ENCODE measurements at regions of chr10 and their contacts with region 1.

Region 1: DNA sequence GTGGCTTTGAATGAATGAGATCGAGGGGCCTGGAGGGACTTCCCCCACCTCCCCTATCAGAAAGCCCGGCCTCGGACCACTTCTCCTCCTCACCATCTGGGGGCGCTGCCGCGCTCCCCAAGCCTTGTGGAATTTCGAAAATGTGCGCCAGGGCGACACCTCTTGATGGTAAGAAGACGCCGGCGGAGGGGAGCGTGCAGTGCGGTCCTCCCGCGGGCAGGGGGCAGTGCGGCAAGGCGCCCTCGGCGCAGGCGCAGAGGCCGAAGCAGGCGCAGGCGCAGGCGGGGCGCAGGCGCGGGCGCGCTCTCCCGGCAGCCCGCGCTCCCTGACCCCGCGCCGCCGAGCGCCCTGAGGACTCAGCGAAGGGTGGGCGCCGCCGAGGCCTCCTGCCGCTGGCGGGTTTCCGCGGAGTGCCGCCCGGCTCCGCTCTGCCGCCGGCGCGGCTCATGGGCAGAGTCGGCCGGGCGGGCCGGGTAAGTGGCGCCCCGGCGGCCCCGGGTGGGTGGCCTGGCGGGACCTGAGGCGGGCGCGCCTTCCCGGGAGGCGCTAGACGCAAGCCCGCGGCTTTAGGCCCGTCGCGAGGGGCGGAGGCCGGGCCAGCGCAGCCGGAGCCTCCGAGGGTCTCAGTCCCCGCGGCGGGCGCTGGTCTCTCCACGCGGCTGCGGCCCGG is at the start of gene RBM17:
- DNase-seq: peak; percentile 99
- ATAC-seq: peak; percentile 85
- H3K4me3 Mint-ChIP-seq: peak within 1 kb of the TSS; percentile 97
- H3K27ac Mint-ChIP-seq: peak within 1 kb of the TSS; percentile 87
- H3K4me1 Mint-ChIP-seq: peaks cover 69% of the 10 kb centered on the region
- H3K27me3 Mint-ChIP-seq: no peaks in the 10 kb centered on the region
- CTCF ChIP-seq: peak; percentile 99
- total RNA-seq, gene RBM17: 207 and 209 TPM in 2 replicates

Region 2: GRCh38 chr10:5446390-5446926 is 642.4 kb before region 1 on chr10:
- CTCF ChIA-PET with region 1: no interaction called
- POLR2A ChIA-PET with region 1: no interaction called
- intact Hi-C with region 1: loop called (anchors 5 kb)
- DNase-seq: peak; percentile 90
- ATAC-seq: peak; percentile 91
- H3K4me3 Mint-ChIP-seq: peak overlapping the region; percentile 86
- H3K27ac Mint-ChIP-seq: peak overlapping the region; percentile 87
- H3K4me1 Mint-ChIP-seq: peaks cover 56% of the 10 kb centered on the region
- H3K27me3 Mint-ChIP-seq: no peaks in the 10 kb centered on the region
- CTCF ChIP-seq: no peak

Region 3: DNA sequence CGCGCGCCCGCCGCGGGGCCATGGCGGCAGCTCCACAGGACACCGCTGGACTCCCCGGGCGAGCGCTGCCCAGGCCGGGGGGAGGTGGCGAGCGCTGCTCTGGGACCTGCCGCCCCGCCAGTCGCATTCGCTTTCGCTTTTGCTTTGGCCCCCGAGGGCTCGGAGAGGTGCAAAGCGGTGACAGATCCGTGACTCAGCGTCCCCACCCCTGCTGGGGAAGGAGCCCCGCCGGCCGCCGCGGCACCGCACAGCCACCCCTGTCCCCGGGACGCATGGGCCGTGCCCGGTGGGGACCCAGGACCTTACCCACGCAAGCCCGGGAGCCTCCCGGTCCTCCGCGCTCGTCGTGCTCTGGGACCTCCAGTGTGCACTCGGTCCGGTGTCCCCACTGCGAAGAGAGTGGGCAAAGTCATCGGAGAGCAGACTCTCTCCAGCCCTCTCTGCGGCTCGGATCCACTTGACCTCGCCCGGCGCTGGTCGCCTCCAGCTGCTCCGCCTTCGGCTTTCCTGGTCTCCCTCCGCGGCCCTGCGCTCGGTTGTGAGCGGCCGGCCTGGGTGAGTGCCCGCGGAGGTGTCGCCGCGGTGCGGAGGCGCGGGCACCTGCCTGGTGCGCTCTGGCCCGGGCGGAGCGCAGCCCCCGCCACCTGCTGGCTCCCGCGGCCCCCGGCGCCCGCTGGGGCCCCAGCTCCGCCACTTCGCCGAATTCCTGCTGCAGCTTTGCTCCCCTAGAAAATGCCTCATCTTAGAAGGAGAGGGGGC is 111.2 kb before region 1 on chr10 and contains the start of gene IL15RA:
- CTCF ChIA-PET with region 1: interaction called, 4 read pairs
- POLR2A ChIA-PET with region 1: interaction called, 4 read pairs
- intact Hi-C with region 1: loop called (anchors 1 kb)
- DNase-seq: peak; percentile 75
- ATAC-seq: peak; percentile 70
- H3K4me3 Mint-ChIP-seq: peak within 1 kb of the TSS; percentile 96
- H3K27ac Mint-ChIP-seq: peak within 1 kb of the TSS; percentile 91
- H3K4me1 Mint-ChIP-seq: peaks cover 41% of the 10 kb centered on the region
- H3K27me3 Mint-ChIP-seq: no peaks in the 10 kb centered on the region
- CTCF ChIP-seq: no peak
- total RNA-seq, gene IL15RA: 19.1 and 19.8 TPM in 2 replicates

Region 4: DNA sequence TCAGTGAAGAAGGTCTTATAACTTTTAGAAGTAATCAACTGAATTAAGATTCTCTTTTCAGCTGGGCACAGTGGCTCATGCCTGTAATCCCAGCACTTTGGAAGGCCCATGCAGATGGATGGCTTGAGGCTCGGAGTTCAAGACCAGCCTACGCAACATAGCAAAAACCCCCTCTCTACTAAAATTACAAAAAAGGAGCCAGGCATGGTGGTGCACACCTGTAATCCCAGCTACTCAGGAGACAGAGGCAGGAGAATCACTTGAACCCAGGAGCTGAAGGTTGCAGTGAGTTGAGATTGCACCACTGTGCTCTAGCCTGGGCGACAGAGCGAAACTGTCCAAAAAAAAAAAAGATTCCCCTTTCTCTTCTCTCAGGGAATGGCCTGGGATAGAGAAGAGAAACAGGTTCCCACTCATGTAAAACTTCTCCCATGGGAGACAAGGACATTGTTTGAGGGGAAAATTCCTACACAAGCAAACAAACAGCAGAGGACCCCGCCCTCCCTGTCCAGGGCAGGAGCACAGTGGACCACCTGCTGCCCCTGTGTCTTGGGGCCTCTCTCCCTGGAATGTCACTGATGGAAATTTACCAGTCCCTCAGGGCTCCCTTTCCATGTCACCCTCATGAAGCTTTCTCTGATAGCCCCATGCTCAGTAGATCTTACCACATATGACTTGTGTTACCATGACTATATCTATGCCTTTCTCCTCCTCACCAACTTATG is 32.3 kb before region 1 on chr10:
- CTCF ChIA-PET with region 1: interaction called, 69 read pairs
- POLR2A ChIA-PET with region 1: interaction called, 146 read pairs
- intact Hi-C with region 1: loop called (anchors 1 kb)
- DNase-seq: no peak
- ATAC-seq: peak; percentile 1
- H3K4me3 Mint-ChIP-seq: peak overlapping the region; percentile 97
- H3K27ac Mint-ChIP-seq: peak overlapping the region; percentile 93
- H3K4me1 Mint-ChIP-seq: peaks cover 84% of the 10 kb centered on the region
- H3K27me3 Mint-ChIP-seq: no peaks in the 10 kb centered on the region
- CTCF ChIP-seq: no peak

Region 5: DNA sequence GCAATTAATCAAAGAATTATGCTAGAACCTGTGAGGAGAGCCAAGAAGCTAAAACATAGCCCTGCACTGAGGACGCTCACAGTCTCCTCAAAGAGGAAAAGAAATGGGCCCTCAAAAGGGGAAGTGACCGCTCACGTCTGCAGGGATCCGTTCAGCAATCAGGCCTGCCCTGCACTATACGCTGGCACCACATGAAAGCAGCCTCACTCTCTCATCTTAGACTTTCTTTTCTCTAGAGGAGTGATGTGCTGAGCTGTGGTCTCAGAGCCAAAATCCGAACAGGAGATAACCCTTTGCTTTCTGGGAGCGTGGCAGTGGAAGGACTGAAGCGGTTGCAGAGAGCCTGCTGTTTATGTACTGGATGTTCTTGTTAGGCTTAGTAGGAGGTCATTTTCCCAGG is 20.4 kb before region 1 on chr10:
- CTCF ChIA-PET with region 1: interaction called, 79 read pairs
- POLR2A ChIA-PET with region 1: interaction called, 35 read pairs
- intact Hi-C with region 1: loop called (anchors 1 kb)
- DNase-seq: no peak
- ATAC-seq: peak; percentile 72
- H3K4me3 Mint-ChIP-seq: peak overlapping the region; percentile 72
- H3K27ac Mint-ChIP-seq: peak overlapping the region; percentile 97
- H3K4me1 Mint-ChIP-seq: peaks cover 93% of the 10 kb centered on the region
- H3K27me3 Mint-ChIP-seq: no peaks in the 10 kb centered on the region
- CTCF ChIP-seq: no peak

Region 6: DNA sequence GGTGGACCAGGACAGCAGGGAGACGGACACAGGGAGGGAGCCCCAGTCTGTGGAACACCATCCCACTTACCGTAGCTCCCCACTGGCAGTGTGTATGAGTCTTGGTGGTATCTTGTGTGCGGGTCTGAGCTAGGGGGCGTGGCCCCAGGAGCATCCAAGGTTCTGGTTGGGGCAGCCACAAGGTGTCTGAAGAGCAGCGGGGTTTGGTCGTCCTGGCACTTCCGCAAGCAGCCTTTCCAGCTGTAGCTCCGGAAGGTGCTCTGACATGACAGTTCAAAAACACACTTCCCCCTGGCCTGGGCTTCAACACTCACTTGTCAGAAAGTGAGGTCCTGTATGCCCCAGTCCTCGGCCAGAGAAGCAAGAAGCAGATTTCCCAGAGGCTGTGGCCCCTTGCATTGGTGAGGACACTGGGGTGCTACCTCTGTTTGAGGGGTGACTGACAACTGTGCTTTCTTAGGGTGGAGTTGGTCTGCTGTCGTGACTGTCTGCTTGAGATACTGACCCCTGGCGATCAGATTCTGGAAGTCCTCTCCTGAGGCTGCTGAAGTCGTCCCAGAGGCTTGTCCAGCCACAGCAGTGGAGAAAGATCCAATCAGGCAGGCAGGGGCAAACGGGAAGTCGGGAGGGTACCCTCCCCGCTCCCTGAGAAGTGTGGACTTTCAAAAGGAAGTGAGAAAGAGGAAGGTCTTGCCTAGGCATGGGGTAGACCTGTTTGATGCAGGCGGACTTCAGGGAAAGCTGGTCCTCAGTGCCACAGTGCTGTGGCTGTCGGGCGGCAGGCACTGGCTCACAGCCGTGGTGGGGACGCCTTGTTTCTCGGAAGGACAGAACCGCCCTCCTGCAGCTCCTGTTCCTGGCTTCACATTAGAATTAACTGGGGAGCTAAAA is 62.5 kb after region 1 on chr10:
- CTCF ChIA-PET with region 1: interaction called, 7 read pairs
- POLR2A ChIA-PET with region 1: no interaction called
- intact Hi-C with region 1: loop called (anchors 2 kb)
- DNase-seq: peak; percentile 53
- ATAC-seq: peak; percentile 83
- H3K4me3 Mint-ChIP-seq: peak overlapping the region; percentile 79
- H3K27ac Mint-ChIP-seq: peak overlapping the region; percentile 85
- H3K4me1 Mint-ChIP-seq: peaks cover 45% of the 10 kb centered on the region
- H3K27me3 Mint-ChIP-seq: no peaks in the 10 kb centered on the region
- CTCF ChIP-seq: no peak